GM10248 (cell line): ENCODE measurements at regions of chr3 and their contacts with region 1.

Region 1: GRCh38 chr3:76570436-76571057 is 469.4 kb upstream of the ROBO2 start:
- DNase-seq: peak; percentile 19
- CTCF ChIP-seq: peak; percentile 64

Region 2: DNA sequence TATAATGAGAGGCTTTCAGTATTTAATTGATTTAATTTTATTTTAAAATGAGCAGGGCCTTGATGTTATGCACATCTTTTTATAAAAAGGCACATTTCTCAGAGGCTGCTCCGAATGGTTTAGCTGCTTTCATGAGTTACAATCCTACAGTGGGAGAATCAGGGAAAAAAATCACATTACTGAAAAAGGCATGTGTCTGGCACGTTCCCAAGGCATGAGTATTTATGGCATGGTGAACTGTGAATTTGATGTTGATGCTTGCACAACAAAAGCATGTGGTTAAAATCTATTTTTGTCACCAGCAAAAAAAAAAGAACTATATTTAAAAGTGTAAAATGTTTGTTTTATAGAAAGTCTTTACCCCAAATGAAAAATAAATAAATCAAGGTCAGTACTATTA is 15.8 kb before region 1 on chr3:
- CTCF ChIA-PET with region 1: interaction called, 17 read pairs
- POLR2A ChIA-PET with region 1: no interaction called
- DNase-seq: no peak
- CTCF ChIP-seq: no peak

Region 3: GRCh38 chr3:76698136-76698706 is 127.7 kb after region 1 on chr3:
- CTCF ChIA-PET with region 1: no interaction called
- POLR2A ChIA-PET with region 1: no interaction called
- DNase-seq: no peak
- CTCF ChIP-seq: no peak